Transverse colon (tissue), 4 donors: ENCODE measurements at regions of chr13 and their contacts with region 1.

Region 1: DNA sequence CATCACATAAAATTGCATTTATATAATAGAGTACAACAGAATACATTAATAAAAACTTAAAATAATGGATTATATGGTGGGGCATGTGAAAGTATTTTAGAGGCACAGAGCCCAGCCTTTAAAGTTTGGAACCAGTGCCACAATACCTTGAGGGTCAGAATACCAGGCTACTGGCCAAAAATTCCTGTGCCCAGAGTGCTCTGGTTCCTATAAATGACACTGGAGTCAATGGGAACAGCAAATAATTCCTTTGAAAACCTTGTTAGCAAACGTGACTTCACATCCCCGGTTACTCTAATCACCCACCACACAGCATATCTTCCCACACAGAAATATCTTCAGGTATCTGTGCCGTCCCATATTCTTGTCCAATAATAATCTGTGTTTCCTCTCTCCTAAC is 1242.6 kb downstream of the DIAPH3 start:
- DNase-seq: no peak
- H3K4me3 ChIP-seq: no peak overlapping the region
- H3K27ac ChIP-seq: no peak overlapping the region
- H3K4me1 ChIP-seq: no peaks in the 10 kb centered on the region
- H3K27me3 ChIP-seq: no peaks in the 10 kb centered on the region
- CTCF ChIP-seq: no peak
- EP300 ChIP-seq: no peak
- POLR2A ChIP-seq: no peak

Region 2: GRCh38 chr13:58953638-58954037 is 32.5 kb after region 1 on chr13:
- in situ Hi-C with region 1: no loop called
- intact Hi-C with region 1: loop called (anchors 1 kb)
- DNase-seq: no peak
- H3K4me3 ChIP-seq: no peak overlapping the region
- H3K27ac ChIP-seq: no peak overlapping the region
- H3K4me1 ChIP-seq: no peaks in the 10 kb centered on the region
- H3K27me3 ChIP-seq: no peaks in the 10 kb centered on the region
- CTCF ChIP-seq: no peak
- EP300 ChIP-seq: no peak
- POLR2A ChIP-seq: no peak